ENCODE measurements at regions of chr15 and their contacts with region 1.

Region 1: DNA sequence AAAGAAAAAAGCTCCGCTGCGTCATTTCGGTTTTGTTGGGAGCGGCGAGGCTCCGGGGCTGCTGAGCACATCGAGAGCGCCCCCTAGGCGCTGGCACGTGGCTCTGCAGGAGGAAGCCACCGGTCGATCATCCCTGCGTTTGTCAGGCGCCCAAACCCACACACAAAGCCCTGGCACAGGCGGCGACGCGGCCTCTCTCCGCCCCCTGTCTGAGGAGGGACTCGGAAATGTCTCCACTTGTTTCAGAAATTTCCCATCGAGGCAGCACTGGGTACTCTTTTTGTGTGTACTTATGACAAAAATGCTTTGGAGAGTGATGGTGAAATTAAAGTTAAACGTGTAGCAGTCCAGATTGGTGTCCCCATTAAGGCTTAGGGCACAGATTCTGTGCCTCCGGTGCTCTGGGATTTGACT is 407.3 kb upstream of the ONECUT1 start:
- DNase-seq: no peak
- H3K4me3 ChIP-seq: peak overlapping the region in 3 of 4 donors; percentile 3 to 13 (median 9)
- H3K27ac ChIP-seq: no peak overlapping the region
- H3K4me1 ChIP-seq: peaks cover 0 to 8% (median 7%) of the 10 kb centered on the region in 4 donors
- H3K27me3 ChIP-seq: peaks cover 0 to 15% (median 0%) of the 10 kb centered on the region in 4 donors
- CTCF ChIP-seq: peak; percentile 40 to 75 (median 61)
- EP300 ChIP-seq: no peak
- POLR2A ChIP-seq: no peak

Region 2: DNA sequence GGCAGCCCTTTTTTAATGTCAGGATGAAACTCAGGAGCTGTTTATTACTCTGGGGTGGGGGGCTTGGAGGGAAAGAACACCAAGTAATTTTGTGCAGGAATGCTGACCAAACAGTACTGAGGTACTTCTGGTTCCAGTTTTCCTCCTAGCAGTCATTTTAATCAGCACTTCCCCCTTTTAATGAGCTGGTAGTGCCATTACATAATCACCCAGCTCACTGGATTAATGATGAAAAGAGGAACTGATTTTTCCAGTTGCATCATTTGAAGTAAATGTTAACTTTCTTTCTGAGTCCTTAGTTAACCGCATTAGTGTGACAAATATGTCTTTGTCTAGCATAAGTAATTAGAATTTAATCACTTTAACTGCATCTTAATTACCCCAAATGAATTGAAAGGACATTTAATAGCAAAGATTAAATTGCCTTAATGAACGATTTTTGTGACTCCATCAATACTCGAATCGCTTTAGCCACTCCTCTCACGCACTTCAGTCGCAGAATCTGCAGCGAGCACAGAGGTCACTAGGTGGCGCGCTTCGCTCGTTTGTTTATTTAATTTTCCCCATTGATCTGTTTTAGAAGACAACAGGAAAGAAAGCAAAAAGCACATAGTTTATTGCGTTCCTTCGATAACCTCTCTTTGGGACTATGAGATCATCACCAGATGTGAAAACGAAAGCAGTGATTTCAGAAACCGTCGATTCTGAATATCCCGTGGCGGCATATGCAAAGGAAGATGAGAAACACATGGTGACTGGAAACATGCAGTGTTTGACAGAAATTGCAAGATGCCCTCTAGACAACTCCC is 417.1 kb before region 1 on chr15:
- intact Hi-C with region 1: loop called (anchors 10 kb)
- DNase-seq: no peak
- H3K4me3 ChIP-seq: peak overlapping the region; percentile 9 to 38 (median 22)
- H3K27ac ChIP-seq: no peak overlapping the region
- H3K4me1 ChIP-seq: peaks cover 15 to 38% (median 31%) of the 10 kb centered on the region in 4 donors
- H3K27me3 ChIP-seq: peaks cover 4 to 96% (median 45%) of the 10 kb centered on the region in 4 donors
- CTCF ChIP-seq: peak; percentile 65 to 80 (median 76)
- EP300 ChIP-seq: no peak
- POLR2A ChIP-seq: no peak